SK-N-SH (cell line): ENCODE measurements at regions of chr11 and their contacts with region 1.

Region 1: DNA sequence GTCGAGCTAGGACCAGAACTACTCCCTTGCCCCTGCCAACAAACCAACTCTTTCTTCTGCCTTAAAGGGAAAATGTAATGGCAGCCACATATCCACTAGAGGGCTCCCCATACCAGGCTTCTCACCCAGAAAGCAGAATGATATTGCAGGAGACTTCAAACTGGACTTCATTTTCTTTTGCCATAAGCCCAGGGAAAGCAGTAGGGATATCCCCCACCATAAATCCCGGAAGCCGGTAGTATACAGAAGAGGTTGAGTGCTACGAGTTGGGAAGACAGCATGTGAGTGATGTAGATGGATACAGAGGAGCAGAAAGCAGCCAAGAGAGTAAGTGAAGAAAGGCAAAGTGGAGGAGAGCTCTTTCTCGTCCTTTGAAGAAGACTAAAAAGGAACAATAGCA is 12.1 kb downstream of the PLAAT5 start:
- DNase-seq: peak; percentile 76
- H3K4me3 ChIP-seq: peak overlapping the region in 1 of 2 experiments; percentile 13; a peak in 1 of 4 replicates
- H3K27ac ChIP-seq: no peak overlapping the region
- H3K4me1 ChIP-seq: no peaks in the 10 kb centered on the region
- H3K27me3 ChIP-seq: no peaks in the 10 kb centered on the region
- CTCF ChIP-seq: peak; percentile 90
- EP300 ChIP-seq: no peak
- RAD21 ChIP-seq: peak; percentile 98

Region 2: DNA sequence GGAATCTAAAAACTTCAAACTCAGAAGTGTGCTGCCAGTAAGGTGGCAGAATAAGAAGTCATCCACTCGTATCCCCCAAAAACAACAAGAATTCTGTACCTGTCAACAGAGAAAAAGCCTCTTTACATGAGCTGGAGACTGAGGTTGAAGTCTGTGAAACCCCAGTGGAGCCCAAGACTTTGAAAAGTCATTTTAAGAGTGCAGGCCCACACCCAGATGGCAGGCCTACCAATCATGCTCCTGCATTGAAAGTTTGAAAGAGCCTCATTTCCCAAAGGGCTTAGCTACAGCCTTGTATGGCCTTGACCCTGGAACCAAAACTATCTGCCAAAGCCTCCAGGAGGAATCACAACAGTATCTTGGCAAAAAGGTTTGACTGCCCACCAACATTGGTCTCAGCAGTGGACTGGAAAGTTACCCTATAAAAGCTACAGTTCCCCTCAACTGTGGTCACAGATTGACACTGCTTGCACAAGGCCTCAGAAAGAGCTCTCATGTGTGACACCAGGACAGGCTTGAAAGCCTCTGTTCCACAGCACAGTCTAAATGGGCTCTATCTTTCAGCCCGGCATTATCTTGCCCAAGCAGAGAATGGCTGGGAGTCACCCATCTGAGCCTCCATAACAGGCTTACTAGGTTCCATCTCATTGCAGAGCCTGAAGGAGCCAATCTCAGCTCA is 61.6 kb before region 1 on chr11:
- CTCF ChIA-PET with region 1: no interaction called
- POLR2A ChIA-PET with region 1: no interaction called
- DNase-seq: no peak
- H3K4me3 ChIP-seq: no peak overlapping the region
- H3K27ac ChIP-seq: no peak overlapping the region
- H3K4me1 ChIP-seq: no peaks in the 10 kb centered on the region
- H3K27me3 ChIP-seq: no peaks in the 10 kb centered on the region
- CTCF ChIP-seq: no peak
- EP300 ChIP-seq: no peak
- RAD21 ChIP-seq: no peak

Region 3: GRCh38 chr11:63508009-63508408 is 29.1 kb after region 1 on chr11:
- CTCF ChIA-PET with region 1: interaction called, 17 read pairs
- POLR2A ChIA-PET with region 1: no interaction called
- DNase-seq: peak; percentile 37
- H3K4me3 ChIP-seq: no peak overlapping the region
- H3K27ac ChIP-seq: no peak overlapping the region
- H3K4me1 ChIP-seq: peaks cover 0 to 3% of the 10 kb centered on the region in 2 experiments; a peak in 1 of 4 replicates
- H3K27me3 ChIP-seq: no peaks in the 10 kb centered on the region; the same call in 1 of the 2 replicates
- CTCF ChIP-seq: peak; percentile 27
- EP300 ChIP-seq: no peak
- RAD21 ChIP-seq: peak; percentile 37; the same call in 1 of the 2 replicates

Region 4: DNA sequence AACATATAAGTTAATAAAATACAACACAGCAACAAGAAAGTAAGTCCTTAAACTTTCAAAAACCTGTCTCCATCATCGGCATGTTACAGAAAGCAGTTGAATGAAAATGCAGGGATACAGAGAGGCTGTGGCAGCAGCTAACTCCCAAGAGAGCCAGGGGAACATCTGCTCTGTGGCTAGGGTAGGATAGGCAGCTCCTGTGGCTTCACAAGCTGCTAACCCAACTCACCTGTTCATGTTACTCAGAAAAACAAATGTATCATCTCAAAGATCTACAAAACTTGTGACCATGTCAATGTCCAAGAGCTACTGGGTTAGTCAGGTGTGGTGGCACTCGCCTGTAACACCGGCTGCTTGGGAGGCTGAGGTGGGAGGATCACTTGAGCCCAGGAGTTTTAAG is 150.5 kb after region 1 on chr11:
- CTCF ChIA-PET with region 1: interaction called, 146 read pairs
- POLR2A ChIA-PET with region 1: no interaction called
- DNase-seq: no peak
- H3K4me3 ChIP-seq: no peak overlapping the region
- H3K27ac ChIP-seq: no peak overlapping the region
- H3K4me1 ChIP-seq: no peaks in the 10 kb centered on the region
- H3K27me3 ChIP-seq: no peaks in the 10 kb centered on the region
- CTCF ChIP-seq: no peak
- EP300 ChIP-seq: no peak
- RAD21 ChIP-seq: no peak

Region 5: GRCh38 chr11:63681321-63682049 is 202.6 kb after region 1 on chr11 and contains the start of gene RTN3:
- CTCF ChIA-PET with region 1: interaction called, 11 read pairs
- POLR2A ChIA-PET with region 1: no interaction called
- DNase-seq: peak; percentile 98
- H3K4me3 ChIP-seq: peak within 1 kb of the TSS; percentile 63 to 97
- H3K27ac ChIP-seq: peak within 1 kb of the TSS; percentile 83 to 91
- H3K4me1 ChIP-seq: peaks cover 4% of the 10 kb centered on the region in 2 experiments; a peak in 3 of 4 replicates
- H3K27me3 ChIP-seq: no peaks in the 10 kb centered on the region
- CTCF ChIP-seq: no peak
- EP300 ChIP-seq: no peak
- RAD21 ChIP-seq: no peak
- polyA plus RNA-seq, gene RTN3: 52.7 and 59.0 TPM in 2 replicates